ENCODE measurements at regions of chr2 and their contacts with region 1.

Region 1: GRCh38 chr2:231612179-231613053 is 19.8 kb downstream of the TEX44 start:
- DNase-seq: peak; percentile 97
- H3K4me3 ChIP-seq: no peak overlapping the region
- H3K27ac ChIP-seq: peak overlapping the region; percentile 98
- H3K4me1 ChIP-seq: peaks cover 41% of the 10 kb centered on the region
- H3K27me3 ChIP-seq: no peaks in the 10 kb centered on the region
- CTCF ChIP-seq: peak; percentile 71 to 94

Region 2: DNA sequence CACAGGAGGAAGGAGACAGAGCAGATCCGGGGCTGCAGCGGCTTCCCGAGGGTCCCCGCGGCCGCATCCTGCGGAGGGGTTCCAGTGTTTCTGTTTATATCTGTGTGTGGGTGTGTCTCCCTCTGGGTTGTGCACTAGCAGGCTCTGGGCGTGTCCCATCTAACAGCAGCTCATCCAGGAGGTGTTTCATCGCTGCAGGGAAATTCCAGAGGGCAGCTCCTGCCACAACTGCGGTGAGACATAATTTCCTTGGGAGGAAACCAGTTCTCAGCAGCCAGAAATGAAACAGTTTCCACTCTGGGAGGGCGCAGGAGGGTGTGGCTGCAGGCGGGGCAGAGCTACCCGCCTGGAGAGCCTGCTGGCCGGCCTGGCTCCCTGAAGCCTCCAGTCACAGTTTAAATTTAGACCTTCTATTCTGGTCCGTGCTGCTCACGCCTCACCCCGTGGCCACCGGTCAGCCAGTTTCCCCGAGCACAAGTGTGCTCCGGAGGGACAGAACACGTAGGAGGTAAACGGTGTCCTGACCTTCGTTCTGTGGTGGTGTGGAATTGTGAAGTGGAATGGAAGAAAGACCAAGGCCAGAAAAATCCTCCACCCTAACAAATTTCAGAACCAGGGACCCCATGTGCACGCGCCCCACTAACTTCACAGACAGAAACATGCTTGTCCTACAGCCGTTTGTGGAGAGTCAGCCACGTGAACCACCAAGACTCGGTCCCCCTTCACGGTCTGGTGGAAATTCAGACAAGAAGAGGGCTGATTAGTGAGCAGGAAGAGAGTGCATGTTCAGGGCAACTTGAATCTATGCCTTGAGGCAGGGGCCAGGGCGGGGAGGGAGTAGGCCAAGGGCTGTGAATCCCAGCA is 30.4 kb after region 1 on chr2:
- CTCF ChIA-PET with region 1: interaction called, 5 read pairs
- dilution Hi-C with region 1: no loop called
- in situ Hi-C with region 1: no loop called
- intact Hi-C with region 1: loop called (anchors 1 kb)
- DNase-seq: peak; percentile 99
- H3K4me3 ChIP-seq: peak overlapping the region in 2 of 3 experiments; percentile 32 to 34
- H3K27ac ChIP-seq: peak overlapping the region; percentile 95
- H3K4me1 ChIP-seq: peaks cover 19% of the 10 kb centered on the region
- H3K27me3 ChIP-seq: no peaks in the 10 kb centered on the region
- CTCF ChIP-seq: no peak

Region 3: DNA sequence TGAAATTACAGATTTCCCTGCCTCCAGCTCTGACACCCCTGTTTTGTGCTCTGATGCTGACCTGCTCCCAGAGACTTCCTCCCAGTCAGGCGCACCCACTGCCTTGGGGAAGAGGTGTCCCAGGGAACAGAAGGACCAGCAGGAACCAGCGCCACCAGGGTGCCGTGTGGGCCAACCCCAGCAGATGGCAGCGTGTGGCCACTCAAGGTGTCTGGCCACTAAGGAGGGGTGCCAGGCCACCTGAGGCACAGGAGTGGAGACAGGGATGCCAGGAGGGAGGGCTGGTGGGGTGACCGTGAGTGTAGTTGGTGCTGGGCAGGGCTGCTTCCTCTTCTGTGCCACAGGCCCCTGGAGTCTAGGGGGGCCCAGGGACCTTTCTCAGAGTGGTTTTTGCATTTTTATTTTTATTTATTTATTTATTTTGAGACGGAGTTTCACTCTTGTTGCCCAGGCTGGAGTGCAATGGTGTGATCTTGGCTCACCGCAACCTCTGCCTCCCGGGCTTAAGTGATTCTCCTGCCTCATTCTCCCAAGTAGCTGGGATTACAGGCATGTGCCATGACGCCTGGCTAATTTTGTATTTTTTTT is 36.3 kb after region 1 on chr2:
- CTCF ChIA-PET with region 1: no interaction called
- dilution Hi-C with region 1: no loop called
- in situ Hi-C with region 1: no loop called
- intact Hi-C with region 1: loop called (anchors 1 kb)
- DNase-seq: peak; percentile 52
- H3K4me3 ChIP-seq: no peak overlapping the region
- H3K27ac ChIP-seq: no peak overlapping the region
- H3K4me1 ChIP-seq: peaks cover 6% of the 10 kb centered on the region
- H3K27me3 ChIP-seq: no peaks in the 10 kb centered on the region
- CTCF ChIP-seq: peak; percentile 59 to 86

Region 4: DNA sequence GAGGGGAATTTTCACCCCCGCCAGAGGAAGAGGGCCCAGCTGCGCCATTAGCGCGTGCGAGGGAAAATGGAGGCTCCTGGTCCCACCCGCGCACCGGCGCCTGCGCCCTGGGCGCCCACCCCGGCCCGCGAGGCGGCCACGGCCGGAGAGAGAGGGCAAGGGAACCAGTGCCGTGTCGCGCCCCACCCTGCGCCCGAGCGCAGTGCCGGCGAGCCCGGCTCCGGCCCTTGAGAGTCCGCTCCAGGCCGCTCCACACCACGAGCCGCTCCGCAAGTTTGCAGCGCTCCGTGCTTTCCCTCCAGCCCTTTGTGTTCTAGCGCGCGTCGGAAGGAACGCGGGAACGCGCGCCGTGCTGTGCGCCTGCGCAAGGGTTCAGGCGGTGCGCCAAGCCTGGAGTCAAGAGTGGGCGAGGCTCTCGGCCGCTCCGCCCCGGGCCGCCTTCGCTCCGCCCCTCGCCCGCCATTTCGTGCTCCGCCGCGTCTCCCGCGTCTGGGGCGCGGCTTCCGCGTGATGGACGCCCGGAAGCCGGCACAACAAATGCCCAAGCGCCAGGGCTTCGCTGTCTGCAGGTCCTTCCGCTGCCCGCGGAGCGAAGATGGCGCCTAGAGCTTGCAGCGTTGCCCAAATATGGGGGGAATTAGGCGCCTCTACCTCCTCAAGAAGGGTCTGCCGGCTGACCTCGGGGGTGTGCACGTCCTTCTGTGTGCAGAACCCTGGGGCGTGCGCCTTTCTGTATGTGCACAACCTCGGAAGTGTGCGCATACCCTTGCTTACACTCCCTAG is 49.8 kb after region 1 on chr2:
- CTCF ChIA-PET with region 1: no interaction called
- dilution Hi-C with region 1: no loop called
- in situ Hi-C with region 1: loop called in 1 of 2 experiments (anchors 5 kb)
- intact Hi-C with region 1: loop called (anchors 2 kb)
- DNase-seq: peak; percentile 92
- H3K4me3 ChIP-seq: peak overlapping the region in 2 of 3 experiments; percentile 45 to 49
- H3K27ac ChIP-seq: peak overlapping the region; percentile 53
- H3K4me1 ChIP-seq: peaks cover 18% of the 10 kb centered on the region
- H3K27me3 ChIP-seq: no peaks in the 10 kb centered on the region
- CTCF ChIP-seq: no peak

Region 5: DNA sequence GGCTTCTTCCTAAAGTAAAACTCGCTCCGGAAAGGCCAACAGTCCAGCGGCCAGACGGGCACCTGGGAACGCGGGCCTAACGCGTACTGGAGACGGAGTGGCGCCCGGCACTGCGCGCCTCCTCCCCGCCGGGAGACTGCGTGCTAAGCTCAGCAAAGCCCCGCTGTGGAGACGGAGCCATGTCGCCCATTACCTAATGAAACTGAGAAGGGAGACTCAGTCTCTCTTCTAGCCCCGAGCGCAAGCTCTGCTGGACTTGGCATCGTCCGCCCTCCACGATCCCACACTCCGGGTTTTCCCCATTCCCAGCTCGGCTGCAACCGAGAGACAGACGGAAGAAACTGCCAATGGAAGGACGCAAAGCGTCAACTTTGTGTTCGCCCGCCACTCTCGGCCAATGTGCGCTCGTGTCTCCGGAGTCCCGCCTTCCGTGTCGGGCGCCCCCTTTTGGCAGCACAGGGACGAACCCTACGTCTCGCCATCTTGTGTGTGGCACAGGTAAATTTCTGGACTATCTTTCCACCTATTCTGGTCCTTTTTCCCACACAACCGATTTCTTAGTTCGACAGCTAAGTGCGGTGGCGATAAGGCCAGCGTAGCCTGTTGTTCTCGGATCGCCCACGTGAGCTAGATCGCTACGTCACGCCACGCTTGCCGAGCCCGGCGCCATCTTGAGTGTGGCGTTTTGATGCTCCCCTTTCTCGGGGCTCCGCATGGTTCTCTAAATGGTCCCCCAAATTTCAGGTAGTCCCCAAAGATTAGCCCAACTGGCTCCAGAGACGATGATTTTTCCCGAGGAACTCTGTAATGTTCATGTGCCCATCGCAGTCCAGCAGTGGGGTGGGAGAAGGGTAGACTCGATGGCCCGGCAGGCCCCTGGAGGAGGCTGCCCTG is 94.6 kb after region 1 on chr2:
- CTCF ChIA-PET with region 1: interaction called, 13 read pairs
- dilution Hi-C with region 1: no loop called
- in situ Hi-C with region 1: loop called (anchors 5 kb)
- intact Hi-C with region 1: no loop called
- DNase-seq: peak; percentile 98
- H3K4me3 ChIP-seq: peak overlapping the region; percentile 54 to 76 (median 63)
- H3K27ac ChIP-seq: peak overlapping the region; percentile 94
- H3K4me1 ChIP-seq: peaks cover 25% of the 10 kb centered on the region
- H3K27me3 ChIP-seq: no peaks in the 10 kb centered on the region
- CTCF ChIP-seq: peak; percentile 93 to 95

Region 6: DNA sequence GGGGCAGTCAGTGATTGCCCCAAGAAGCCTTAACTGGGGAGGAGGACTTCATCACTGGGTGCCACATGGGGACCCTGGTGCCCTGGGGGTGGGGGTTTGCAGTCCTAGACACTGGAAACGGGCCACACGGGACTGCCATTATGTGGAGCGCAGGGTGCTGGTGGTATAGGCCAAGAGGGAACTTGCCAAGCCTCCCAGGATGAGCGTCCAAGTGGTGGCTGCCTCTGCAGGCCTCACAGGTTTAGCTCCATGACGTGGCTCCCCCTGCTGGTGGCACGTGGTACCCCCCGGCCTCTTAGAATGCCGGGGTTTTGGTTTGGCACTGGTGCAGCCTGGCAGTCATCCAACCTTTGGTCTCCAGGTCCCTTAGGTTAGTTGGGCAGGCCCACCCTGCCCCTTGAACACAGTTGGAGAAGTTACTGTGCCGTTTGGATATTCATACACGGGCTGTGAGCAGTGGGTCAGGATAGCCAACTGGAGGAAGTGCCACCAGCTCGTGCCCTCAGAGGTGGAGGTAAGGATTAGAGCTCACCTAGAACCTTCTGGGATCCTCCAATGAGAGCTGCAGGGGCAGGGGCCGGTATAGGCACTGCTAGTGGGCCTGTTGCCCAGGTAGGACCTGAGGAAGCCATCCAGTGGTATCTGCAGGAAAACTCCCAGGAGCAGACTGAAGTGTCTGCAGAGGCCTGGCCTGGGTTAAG is 101.5 kb after region 1 on chr2:
- CTCF ChIA-PET with region 1: interaction called, 4 read pairs
- dilution Hi-C with region 1: no loop called
- in situ Hi-C with region 1: loop called (anchors 5 kb)
- intact Hi-C with region 1: loop called (anchors 1 kb)
- DNase-seq: peak; percentile 74
- H3K4me3 ChIP-seq: no peak overlapping the region
- H3K27ac ChIP-seq: no peak overlapping the region
- H3K4me1 ChIP-seq: peaks cover 16% of the 10 kb centered on the region
- H3K27me3 ChIP-seq: no peaks in the 10 kb centered on the region
- CTCF ChIP-seq: peak; percentile 87 to 97

Region 7: GRCh38 chr2:231786177-231786916 is 173.9 kb after region 1 on chr2 and contains the start of gene COPS7B:
- CTCF ChIA-PET with region 1: no interaction called
- dilution Hi-C with region 1: no loop called
- in situ Hi-C with region 1: no loop called
- intact Hi-C with region 1: loop called (anchors 2 kb)
- DNase-seq: peak; percentile 73
- H3K4me3 ChIP-seq: peak within 1 kb of the TSS; percentile 67 to 98 (median 92)
- H3K27ac ChIP-seq: peak within 1 kb of the TSS; percentile 37
- H3K4me1 ChIP-seq: peaks cover 18% of the 10 kb centered on the region
- H3K27me3 ChIP-seq: no peaks in the 10 kb centered on the region
- CTCF ChIP-seq: peak; percentile 45 to 70
- total RNA-seq, gene COPS7B: 29.8 to 43.7 TPM

Measured in mammary epithelial cell (primary cell).